Sigmoid colon (tissue), 7 donors: ENCODE measurements at regions of chr16 and their contacts with region 1.

Region 1: DNA sequence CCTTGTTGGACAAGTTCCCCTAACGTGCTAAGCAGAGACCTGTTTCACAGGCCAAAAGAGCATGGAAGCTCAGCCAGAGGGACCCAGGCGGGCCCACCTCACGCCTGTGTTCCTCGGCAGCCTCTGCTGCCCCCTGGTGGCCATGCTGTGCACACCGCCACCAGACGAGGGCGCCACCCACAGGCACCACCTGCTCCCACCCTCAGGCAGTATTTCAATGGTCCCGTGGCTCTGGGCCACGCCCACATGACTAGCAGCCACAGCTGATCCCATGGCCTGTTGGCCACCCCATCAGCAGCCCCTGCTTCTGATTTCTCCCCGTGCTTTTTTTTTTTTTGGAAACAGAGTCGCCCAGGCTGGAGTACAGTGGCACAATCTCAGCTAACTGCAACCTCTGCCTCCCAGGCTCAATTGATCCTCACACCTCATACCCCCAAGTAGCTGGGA is 18.9 kb downstream of the MPG start:
- DNase-seq: peak; percentile 95
- H3K4me3 ChIP-seq: no peak overlapping the region
- H3K27ac ChIP-seq: no peak overlapping the region
- H3K4me1 ChIP-seq: peaks cover 0 to 19% (median 12%) of the 10 kb centered on the region in 4 donors
- H3K27me3 ChIP-seq: no peaks in the 10 kb centered on the region
- CTCF ChIP-seq: peak; percentile 97 to 99 (median 98)
- EP300 ChIP-seq: no peak
- POLR2A ChIP-seq: no peak

Region 2: GRCh38 chr16:38939-39892 is 57.7 kb before region 1 on chr16:
- intact Hi-C with region 1: no loop called
- DNase-seq: no peak
- H3K4me3 ChIP-seq: no peak overlapping the region
- H3K27ac ChIP-seq: no peak overlapping the region
- H3K4me1 ChIP-seq: no peaks in the 10 kb centered on the region
- H3K27me3 ChIP-seq: no peaks in the 10 kb centered on the region
- CTCF ChIP-seq: no peak
- EP300 ChIP-seq: no peak
- POLR2A ChIP-seq: no peak

Region 3: GRCh38 chr16:65671-66137 is 31.3 kb before region 1 on chr16:
- intact Hi-C with region 1: loop called (anchors 1 kb)
- DNase-seq: peak; percentile 90
- H3K4me3 ChIP-seq: no peak overlapping the region
- H3K27ac ChIP-seq: peak overlapping the region in 1 of 4 donors; percentile 61
- H3K4me1 ChIP-seq: peaks cover 0 to 50% (median 39%) of the 10 kb centered on the region in 4 donors
- H3K27me3 ChIP-seq: no peaks in the 10 kb centered on the region
- CTCF ChIP-seq: peak; percentile 95 to 98 (median 97)
- EP300 ChIP-seq: no peak
- POLR2A ChIP-seq: no peak

Region 4: GRCh38 chr16:77807-78443 is 19.0 kb before region 1 on chr16 and contains the start of gene MPG:
- intact Hi-C with region 1: no loop called
- DNase-seq: peak; percentile 95
- H3K4me3 ChIP-seq: peak within 1 kb of the TSS; percentile 66 to 97 (median 87)
- H3K27ac ChIP-seq: peak within 1 kb of the TSS; percentile 94 to 97 (median 96)
- H3K4me1 ChIP-seq: peaks cover 0 to 52% (median 43%) of the 10 kb centered on the region in 4 donors
- H3K27me3 ChIP-seq: no peaks in the 10 kb centered on the region
- CTCF ChIP-seq: no peak
- EP300 ChIP-seq: peak in 1 of 4 donors; percentile 37
- POLR2A ChIP-seq: peak; percentile 25 to 54
- total RNA-seq, gene MPG: 74.3 to 118 (median 100.0) TPM

Region 5: GRCh38 chr16:660459-661183 is 563.7 kb after region 1 on chr16:
- intact Hi-C with region 1: no loop called
- DNase-seq: peak; percentile 96
- H3K4me3 ChIP-seq: peak overlapping the region in 3 of 4 donors; percentile 24 to 39 (median 38)
- H3K27ac ChIP-seq: peak overlapping the region; percentile 75 to 87 (median 84)
- H3K4me1 ChIP-seq: peaks cover 0 to 19% (median 14%) of the 10 kb centered on the region in 4 donors
- H3K27me3 ChIP-seq: no peaks in the 10 kb centered on the region
- CTCF ChIP-seq: peak; percentile 47 to 74 (median 63)
- EP300 ChIP-seq: no peak
- POLR2A ChIP-seq: no peak